Activated naive CD4-positive, alpha-beta T cell treated with anti-CD3 and anti-CD28 coated beads for 36 hours (primary cell): ENCODE measurements at regions of chr11 and their contacts with region 1.

Region 1: DNA sequence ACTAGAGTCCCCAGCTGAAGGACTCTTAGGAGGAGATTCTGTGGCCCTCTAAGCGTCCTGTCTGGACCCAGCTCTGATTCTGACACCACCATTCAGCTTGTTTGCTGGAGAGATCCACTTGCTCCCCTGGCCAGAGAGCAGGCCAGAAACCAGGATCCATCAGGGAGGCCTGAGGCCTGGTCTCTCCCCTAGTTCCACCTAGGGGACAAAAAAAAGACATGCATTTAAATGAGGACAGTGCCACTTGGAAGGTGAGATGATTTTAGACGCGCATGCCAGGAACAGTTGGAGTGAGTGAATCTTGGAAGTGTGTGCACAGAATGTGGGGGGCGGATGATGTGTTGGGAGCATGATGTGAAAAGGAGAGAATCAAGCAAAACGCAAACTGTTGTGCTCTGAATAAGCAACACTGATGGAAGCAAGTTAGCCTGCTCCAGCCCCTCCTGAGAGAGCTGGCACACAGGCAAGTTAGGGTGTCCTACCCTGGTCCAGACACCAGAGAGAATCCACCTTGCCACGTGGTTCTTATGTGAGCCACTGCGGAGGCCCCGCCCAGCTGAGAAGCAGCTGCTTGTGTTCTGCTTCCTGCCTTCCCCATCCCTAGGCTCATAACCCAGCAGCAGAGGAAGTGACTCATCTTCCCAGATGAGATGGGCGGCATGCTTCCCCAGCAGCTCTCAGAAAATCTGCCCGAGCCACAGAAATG is 8.0 kb upstream of the SLCO2B1 start:
- DNase-seq: peak; percentile 92
- H3K4me3 Mint-ChIP-seq: no peak overlapping the region
- H3K27ac Mint-ChIP-seq: peak overlapping the region; percentile 86
- H3K4me1 Mint-ChIP-seq: peaks cover 27% of the 10 kb centered on the region
- H3K27me3 Mint-ChIP-seq: no peaks in the 10 kb centered on the region

Region 2: DNA sequence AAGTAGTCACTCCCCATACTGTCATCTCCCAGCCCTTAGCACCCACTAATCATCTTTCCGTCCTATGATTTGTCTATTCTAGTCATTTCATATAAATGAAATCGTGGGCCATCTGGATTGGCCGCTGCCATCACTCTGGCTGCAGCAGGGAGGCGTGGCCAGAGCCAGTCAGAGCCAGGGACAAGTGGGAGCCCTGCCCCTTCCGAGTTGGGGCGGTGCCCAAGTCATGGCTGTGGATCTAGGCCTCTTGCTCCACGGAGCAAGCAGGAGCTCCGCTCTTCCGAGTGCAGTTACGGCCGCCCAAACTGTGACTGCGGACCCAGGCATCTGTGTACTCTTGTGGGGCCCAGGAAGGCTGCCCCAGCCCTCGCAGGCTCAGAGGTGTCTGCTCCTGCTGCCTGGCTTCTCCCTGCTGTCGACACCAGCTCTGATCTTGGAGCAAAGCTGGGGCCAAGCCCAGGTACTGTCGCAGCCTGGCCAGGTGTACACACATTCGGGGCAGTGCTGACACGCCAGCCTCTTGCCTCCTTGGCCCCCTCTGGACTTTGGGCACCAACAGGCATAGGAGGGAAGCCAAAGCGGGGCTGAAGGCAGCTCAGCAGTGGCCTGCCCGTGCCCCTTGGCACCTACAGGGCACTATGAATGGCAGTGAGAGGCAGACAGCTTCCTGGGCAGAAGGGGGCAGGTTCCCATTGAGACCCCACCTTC is 1346.8 kb before region 1 on chr11:
- CTCF ChIA-PET with region 1: no interaction called
- intact Hi-C with region 1: no loop called
- DNase-seq: no peak
- H3K4me3 Mint-ChIP-seq: no peak overlapping the region
- H3K27ac Mint-ChIP-seq: no peak overlapping the region
- H3K4me1 Mint-ChIP-seq: peaks cover 3% of the 10 kb centered on the region
- H3K27me3 Mint-ChIP-seq: no peaks in the 10 kb centered on the region

Region 3: DNA sequence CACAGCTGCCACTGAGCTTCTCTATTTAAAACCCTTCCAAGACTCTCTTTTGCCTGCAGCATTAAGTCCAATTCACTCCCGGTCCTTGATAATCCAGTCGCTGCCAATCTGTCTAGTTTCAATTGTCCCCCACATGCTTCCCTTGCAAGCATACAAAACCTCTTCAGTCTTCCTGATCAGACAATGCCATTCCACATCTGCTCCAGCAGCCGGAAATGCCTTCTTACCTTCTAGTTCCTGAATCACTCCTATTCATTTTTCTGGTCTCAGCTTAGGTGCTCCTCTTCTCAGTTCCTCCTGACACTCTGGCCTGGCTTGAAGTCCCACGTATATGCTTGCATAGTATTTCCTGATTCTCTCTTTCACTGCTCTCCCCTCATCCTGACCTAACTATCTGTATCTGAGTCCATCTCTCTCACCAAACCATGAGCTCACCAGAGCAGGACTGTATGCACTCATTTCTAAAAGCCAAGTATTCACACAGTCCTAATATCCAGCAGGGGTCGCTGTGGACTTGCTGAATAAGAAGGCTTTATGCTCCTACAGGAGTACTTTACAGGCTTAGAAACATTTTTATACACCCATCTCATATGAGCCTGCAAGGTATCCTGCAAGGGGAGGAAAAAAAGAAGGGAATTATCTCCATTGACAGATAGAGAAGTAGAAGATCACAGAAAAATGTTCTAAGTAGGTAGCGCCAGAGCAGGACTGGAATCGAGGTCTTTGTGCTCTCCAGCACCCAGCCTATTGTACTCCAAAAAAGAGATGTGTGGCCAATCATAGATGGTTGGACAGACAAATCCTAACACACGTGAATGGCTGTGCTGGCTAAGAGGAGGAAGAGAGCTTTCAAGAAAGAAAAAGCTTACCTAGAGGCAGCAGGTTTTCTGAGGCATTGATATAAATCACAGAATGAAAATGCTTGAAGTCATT is 213.2 kb before region 1 on chr11:
- CTCF ChIA-PET with region 1: interaction called, 8 read pairs
- intact Hi-C with region 1: loop called (anchors 1 kb)
- DNase-seq: peak; percentile 84
- H3K4me3 Mint-ChIP-seq: no peak overlapping the region
- H3K27ac Mint-ChIP-seq: no peak overlapping the region
- H3K4me1 Mint-ChIP-seq: peaks cover 2% of the 10 kb centered on the region
- H3K27me3 Mint-ChIP-seq: no peaks in the 10 kb centered on the region

Region 4: GRCh38 chr11:75022759-75023396 is 120.0 kb before region 1 on chr11:
- CTCF ChIA-PET with region 1: interaction called, 29 read pairs
- intact Hi-C with region 1: loop called (anchors 1 kb)
- DNase-seq: peak; percentile 87
- H3K4me3 Mint-ChIP-seq: no peak overlapping the region
- H3K27ac Mint-ChIP-seq: no peak overlapping the region
- H3K4me1 Mint-ChIP-seq: no peaks in the 10 kb centered on the region
- H3K27me3 Mint-ChIP-seq: no peaks in the 10 kb centered on the region

Region 5: GRCh38 chr11:75204685-75205563 is 62.1 kb after region 1 on chr11:
- CTCF ChIA-PET with region 1: interaction called, 430 read pairs
- intact Hi-C with region 1: loop called (anchors 1 kb)
- DNase-seq: peak; percentile 93
- H3K4me3 Mint-ChIP-seq: no peak overlapping the region
- H3K27ac Mint-ChIP-seq: no peak overlapping the region
- H3K4me1 Mint-ChIP-seq: no peaks in the 10 kb centered on the region
- H3K27me3 Mint-ChIP-seq: no peaks in the 10 kb centered on the region

Region 6: GRCh38 chr11:75270896-75271418 is 128.1 kb after region 1 on chr11:
- CTCF ChIA-PET with region 1: interaction called, 17 read pairs
- intact Hi-C with region 1: loop called (anchors 1 kb)
- DNase-seq: peak; percentile 43
- H3K4me3 Mint-ChIP-seq: no peak overlapping the region
- H3K27ac Mint-ChIP-seq: no peak overlapping the region
- H3K4me1 Mint-ChIP-seq: peaks cover 30% of the 10 kb centered on the region
- H3K27me3 Mint-ChIP-seq: no peaks in the 10 kb centered on the region

Region 7: GRCh38 chr11:75525596-75526541 is 383.0 kb after region 1 on chr11 and contains the start of gene GDPD5:
- CTCF ChIA-PET with region 1: no interaction called
- intact Hi-C with region 1: loop called (anchors 10 kb)
- DNase-seq: peak; percentile 90
- H3K4me3 Mint-ChIP-seq: peak within 1 kb of the TSS; percentile 72
- H3K27ac Mint-ChIP-seq: no peak within 1 kb of the TSS
- H3K4me1 Mint-ChIP-seq: peaks cover 19% of the 10 kb centered on the region
- H3K27me3 Mint-ChIP-seq: peaks cover 5% of the 10 kb centered on the region
- total RNA-seq, gene GDPD5: 13.3 to 13.5 TPM